ENCODE measurements at regions of chr13 and their contacts with region 1.

Region 1: DNA sequence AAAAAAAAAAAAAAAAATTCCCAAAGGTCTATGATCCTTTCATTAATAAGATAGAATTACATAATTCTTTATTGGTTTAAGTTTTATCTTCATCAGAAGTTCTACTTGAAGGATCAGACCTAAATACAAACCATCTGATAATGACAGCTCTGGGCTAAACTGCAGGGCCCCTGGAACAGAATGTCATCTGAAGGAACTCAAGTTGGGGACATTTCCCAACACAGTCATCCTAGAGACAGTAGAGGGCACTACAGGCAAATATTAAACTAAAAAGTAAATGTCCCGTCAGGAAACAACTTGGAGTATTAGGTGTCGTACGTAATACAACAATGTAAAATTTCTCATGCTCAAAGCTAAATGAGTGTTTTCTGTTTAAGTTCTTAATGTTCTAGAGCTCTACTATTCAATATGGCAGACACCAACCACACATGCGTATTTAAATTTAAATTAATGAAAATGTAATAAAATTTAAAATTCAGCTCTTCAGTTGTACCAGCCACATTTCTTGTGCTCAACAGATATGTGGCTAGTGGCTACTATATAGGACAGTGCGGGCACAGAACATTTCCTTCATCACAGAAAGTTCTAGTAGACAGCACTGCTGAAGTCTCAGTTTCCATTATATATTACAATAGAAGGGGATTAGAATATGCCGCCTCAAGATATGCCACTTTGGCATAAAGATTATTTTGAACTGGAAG is 21.8 kb upstream of the NAXD start:
- DNase-seq: no peak
- ATAC-seq: peak; percentile 84 to 89
- H3K4me3 ChIP-seq: no peak overlapping the region
- H3K27ac ChIP-seq: no peak overlapping the region
- H3K4me1 ChIP-seq: no peaks in the 10 kb centered on the region
- H3K27me3 ChIP-seq: no peaks in the 10 kb centered on the region

Region 2: GRCh38 chr13:110499621-110500281 is 93.8 kb before region 1 on chr13:
- intact Hi-C with region 1: no loop called
- DNase-seq: no peak
- ATAC-seq: no peak
- H3K4me3 ChIP-seq: no peak overlapping the region
- H3K27ac ChIP-seq: no peak overlapping the region
- H3K4me1 ChIP-seq: peaks cover 2% of the 10 kb centered on the region
- H3K27me3 ChIP-seq: no peaks in the 10 kb centered on the region

Region 3: DNA sequence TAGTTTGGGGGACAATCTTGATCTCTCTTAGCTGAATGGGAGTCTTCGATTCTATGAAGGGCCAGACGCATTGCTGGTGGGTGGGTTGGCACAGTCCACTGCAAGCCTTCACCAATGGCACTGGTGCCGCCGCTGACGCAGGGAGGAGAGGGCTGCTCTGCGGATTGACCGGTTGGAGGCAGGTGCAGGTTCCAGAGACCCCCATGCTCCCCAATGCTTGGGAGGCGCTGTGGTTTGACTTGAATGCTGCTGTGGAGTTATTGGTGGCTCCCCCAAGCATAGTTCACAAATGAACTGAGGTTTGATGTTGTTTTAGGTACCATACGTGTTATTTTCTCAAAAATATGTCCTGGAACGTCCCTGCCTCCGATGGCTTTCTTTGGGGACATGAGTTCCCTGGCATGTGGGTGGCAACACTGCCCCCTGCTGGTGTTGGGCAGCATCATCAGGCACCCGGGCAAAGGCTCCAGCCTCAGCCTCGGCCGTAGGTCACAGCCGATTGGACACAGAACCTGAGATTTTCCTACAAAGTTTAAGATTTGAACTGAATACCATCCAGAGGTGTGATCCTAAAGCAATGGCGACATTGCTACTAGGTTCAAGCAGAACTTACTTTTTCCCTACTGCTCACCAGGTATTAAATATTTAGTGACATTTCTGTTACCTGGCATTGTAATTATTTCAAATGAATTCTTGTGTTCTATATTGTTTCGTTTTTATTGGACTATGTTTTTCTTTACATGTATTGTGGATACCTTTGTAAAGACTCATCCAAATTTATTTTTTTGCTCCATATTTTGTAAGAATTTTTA is 225.8 kb after region 1 on chr13:
- intact Hi-C with region 1: loop called in 3 of 4 experiments (anchors 5 kb)
- DNase-seq: peak; percentile 77 to 91 (median 90)
- ATAC-seq: peak; percentile 86 to 94
- H3K4me3 ChIP-seq: no peak overlapping the region
- H3K27ac ChIP-seq: no peak overlapping the region
- H3K4me1 ChIP-seq: no peaks in the 10 kb centered on the region
- H3K27me3 ChIP-seq: no peaks in the 10 kb centered on the region

Region 4: GRCh38 chr13:110826861-110827672 is 233.5 kb after region 1 on chr13:
- intact Hi-C with region 1: loop called in 1 of 4 experiments (anchors 5 kb)
- DNase-seq: peak; percentile 46 to 82 (median 70)
- ATAC-seq: peak; percentile 62 to 65
- H3K4me3 ChIP-seq: no peak overlapping the region
- H3K27ac ChIP-seq: no peak overlapping the region
- H3K4me1 ChIP-seq: no peaks in the 10 kb centered on the region
- H3K27me3 ChIP-seq: no peaks in the 10 kb centered on the region

Region 5: DNA sequence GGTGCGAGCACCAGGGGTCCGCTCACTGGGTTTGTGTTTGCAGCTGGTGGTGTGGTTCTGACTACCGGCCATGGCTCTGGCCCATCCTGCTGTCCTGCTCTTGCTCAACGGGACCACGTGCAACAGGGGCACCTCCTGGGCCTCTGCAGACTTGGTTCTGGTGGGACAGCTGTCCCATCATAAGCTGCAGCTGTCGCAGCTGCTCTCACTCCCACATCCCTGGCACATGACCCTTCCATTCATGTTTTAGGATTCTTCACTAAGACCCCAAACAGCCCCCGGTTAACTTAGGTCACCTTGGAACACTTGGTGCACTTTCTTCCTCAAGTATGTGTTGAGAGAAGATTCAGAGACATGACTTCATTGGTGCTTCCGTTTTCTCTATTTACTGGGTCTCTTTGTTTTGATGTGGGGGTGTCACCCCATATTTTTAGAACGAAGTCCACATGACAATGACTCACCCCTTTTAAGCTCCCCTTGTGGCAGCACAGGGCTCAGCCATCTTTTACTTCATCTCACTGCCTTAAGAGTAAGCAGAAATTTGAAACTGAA is 453.1 kb after region 1 on chr13:
- intact Hi-C with region 1: loop called in 1 of 4 experiments (anchors 10 kb)
- DNase-seq: peak in 1 of 3 donors; percentile 67
- ATAC-seq: peak; percentile 30 to 34
- H3K4me3 ChIP-seq: no peak overlapping the region
- H3K27ac ChIP-seq: no peak overlapping the region
- H3K4me1 ChIP-seq: no peaks in the 10 kb centered on the region
- H3K27me3 ChIP-seq: no peaks in the 10 kb centered on the region

Measured in right cardiac atrium (tissue), 5 donors.